ENCODE measurements at regions of chr2 and their contacts with region 1.

Region 1: DNA sequence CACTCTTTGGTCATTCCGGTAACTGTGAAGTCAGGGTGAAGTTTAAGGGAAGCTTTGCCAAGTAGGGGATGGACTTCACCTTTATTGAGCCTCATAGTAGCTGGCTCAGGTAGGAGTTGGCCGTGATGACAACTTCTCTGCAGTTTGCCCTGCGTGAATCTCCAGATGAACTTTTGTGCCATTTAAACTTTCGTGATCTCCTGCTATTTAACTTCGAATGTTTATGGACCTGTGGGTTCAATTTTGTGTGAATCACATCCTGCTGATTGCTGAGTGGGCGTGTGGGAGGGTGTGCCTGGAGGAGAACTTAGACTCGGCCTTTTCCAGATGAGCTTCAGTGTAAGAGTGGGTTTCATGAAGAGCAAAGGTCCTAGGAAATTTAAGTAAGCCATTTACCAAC is 4.2 kb downstream of the UGT1A1 start:
- DNase-seq: peak; percentile 7
- H3K4me3 Mint-ChIP-seq: peak overlapping the region; percentile 45
- H3K27ac Mint-ChIP-seq: peak overlapping the region; percentile 50
- H3K4me1 Mint-ChIP-seq: peaks cover 68% of the 10 kb centered on the region
- H3K27me3 Mint-ChIP-seq: no peaks in the 10 kb centered on the region
- CTCF ChIP-seq: no peak

Region 2: DNA sequence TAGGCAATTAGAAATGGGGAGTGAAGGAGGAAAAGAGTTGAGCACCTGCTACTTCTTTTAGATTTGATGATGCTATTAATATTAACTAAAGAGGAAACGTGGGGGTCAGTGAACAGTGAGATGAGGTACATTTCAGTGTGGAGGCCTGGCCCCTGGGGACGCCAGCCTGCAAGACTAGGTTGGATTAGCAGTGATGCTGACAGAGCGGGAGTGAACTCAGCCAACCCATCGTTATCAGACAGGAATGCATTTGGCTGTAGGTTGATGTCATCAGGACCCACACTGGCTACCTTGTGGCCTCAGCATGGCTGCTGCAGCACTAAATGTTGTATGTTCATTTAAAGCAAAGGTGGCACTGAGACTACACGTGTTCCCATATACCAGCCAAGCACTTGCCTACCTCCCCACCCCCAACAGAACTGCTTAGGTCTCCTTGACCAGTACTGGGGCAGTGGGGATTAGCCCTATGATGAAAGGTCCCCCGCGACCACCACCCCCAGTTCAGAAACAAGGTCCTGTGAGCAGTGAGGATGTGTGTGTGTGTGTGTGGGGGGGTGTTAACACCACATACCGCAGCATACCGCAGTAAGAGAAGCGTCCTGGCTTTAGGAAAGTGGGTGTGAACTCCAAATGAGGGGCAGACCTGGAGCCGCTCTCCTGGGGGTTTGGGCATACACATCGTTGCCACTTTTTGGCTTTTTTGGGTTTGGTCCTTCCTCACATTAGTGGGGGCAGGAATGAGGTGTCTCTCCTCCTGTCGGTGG is 383.9 kb before region 1 on chr2:
- CTCF ChIA-PET with region 1: no interaction called
- intact Hi-C with region 1: no loop called
- DNase-seq: no peak
- H3K4me3 Mint-ChIP-seq: no peak overlapping the region
- H3K27ac Mint-ChIP-seq: no peak overlapping the region
- H3K4me1 Mint-ChIP-seq: peaks cover 8% of the 10 kb centered on the region
- H3K27me3 Mint-ChIP-seq: no peaks in the 10 kb centered on the region
- CTCF ChIP-seq: no peak

Region 3: DNA sequence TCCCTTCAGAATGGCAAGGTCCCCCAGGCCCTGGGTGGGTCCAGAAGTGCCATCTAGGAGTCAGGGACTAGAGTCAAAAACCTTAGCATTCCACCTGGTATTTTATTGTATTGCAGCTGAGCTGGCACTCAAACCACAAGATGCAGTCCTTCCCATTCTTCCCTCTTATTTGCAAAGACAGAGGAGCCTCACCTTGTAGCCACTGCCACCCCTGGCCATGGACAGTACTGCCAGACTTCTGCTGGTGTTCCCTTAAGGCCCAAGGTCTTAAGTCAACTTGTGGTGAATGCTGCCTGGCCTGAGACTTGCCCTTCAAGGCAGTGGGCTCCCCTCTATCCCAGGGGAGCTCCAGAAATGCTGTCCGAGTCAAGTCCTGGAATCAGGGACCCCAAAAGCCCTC is 121.1 kb before region 1 on chr2:
- CTCF ChIA-PET with region 1: no interaction called
- intact Hi-C with region 1: loop called (anchors 10 kb)
- DNase-seq: peak; percentile 63
- H3K4me3 Mint-ChIP-seq: no peak overlapping the region
- H3K27ac Mint-ChIP-seq: peak overlapping the region; percentile 18
- H3K4me1 Mint-ChIP-seq: peaks cover 42% of the 10 kb centered on the region
- H3K27me3 Mint-ChIP-seq: no peaks in the 10 kb centered on the region
- CTCF ChIP-seq: peak; percentile 53

Region 4: GRCh38 chr2:233728723-233729301 is 35.5 kb before region 1 on chr2 and contains the start of gene UGT1A3:
- CTCF ChIA-PET with region 1: no interaction called
- intact Hi-C with region 1: loop called (anchors 2 kb)
- DNase-seq: peak; percentile 8
- H3K4me3 Mint-ChIP-seq: no peak within 1 kb of the TSS
- H3K27ac Mint-ChIP-seq: peak within 1 kb of the TSS; percentile 66
- H3K4me1 Mint-ChIP-seq: peaks cover 37% of the 10 kb centered on the region
- H3K27me3 Mint-ChIP-seq: no peaks in the 10 kb centered on the region
- CTCF ChIP-seq: no peak
- total RNA-seq, gene UGT1A3: 5.9 and 6.0 TPM in 2 replicates